ENCODE measurements at regions of chr2 and their contacts with region 1.

Region 1: GRCh38 chr2:165967746-165968145 is 14.2 kb upstream of the TTC21B start:
- DNase-seq: no peak
- H3K4me3 ChIP-seq: no peak overlapping the region
- CTCF ChIP-seq: no peak

Region 2: DNA sequence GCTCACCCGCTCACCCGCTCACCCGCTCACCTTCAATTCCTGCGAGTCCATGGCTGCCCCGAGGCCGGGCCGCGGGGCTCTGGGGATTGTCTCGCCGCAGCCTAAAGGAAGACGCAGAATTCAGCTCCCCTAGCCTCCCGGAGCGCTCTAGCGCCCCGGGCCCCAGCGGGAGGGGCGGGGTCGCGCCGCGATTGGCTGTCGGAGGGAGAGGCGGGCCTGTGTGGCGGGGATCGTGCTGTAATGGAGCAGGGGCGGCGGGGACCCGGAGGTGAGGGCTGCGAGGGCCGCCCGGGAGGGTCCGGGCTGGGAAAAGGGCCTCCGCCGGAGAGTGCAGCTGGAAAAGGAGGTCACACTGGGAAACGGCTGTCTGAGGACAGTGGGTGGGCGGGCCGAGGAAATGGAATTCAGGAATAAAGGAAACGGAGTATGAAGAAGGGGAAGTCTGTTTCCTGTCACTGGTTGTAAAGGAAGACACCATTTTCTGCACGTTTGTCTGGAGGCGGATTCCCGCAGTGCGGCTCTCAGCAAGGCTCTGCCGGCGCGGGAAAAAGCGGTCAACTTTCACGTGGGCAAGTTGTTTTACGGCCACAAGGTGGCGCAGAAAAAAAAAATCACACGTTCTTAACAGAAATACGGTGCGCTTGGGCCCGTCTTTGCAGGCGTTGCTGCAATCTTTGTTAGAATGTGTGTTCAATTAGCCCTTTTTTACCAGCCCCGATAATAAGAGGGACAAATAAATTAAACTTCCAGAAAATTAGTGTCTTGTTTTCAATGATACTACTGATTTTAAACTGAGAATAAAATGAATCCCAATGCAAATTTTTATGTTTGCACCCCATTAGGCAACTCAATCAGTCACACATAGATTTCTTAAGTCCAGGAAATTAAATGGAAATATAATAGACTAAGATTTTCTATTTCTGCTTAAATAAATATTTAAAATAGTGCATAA is 13.8 kb before region 1 on chr2 and contains the start of gene TTC21B:
- CTCF ChIA-PET with region 1: interaction called, 17 read pairs
- POLR2A ChIA-PET with region 1: no interaction called
- DNase-seq: peak; percentile 69
- H3K4me3 ChIP-seq: peak within 1 kb of the TSS; percentile 73
- CTCF ChIP-seq: peak; percentile 63